Activated CD4-positive, alpha-beta T cell treated with anti-CD3 and anti-CD28 coated beads, Interleukin-2, amount 10 ng/mL, durations not matched to agents 24 days and 14 days (primary cell): ENCODE measurements at regions of chr7 and their contacts with region 1.

Region 1: DNA sequence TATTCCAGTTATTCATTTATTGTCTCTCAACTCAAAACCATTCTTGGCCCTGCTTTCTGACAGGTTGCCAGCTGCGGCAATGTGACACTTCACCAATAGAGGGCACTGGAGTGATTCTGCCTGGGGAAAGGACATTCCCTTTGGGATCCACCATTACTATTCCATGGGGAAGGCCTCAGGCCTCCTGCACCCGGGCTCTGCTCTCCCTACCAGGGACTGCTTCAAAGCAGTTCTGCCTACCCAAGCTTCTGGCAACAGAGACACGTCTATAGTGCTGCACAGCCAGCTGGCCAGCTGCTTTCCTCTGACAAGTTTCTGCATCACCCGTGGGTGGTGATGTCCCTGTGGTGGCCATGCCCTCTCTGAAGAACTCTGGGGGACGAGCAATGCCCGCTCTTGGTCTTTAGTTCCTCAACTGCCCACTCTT is 163.8 kb downstream of the ELMO1 start:
- DNase-seq: peak; percentile 82
- H3K4me3 Mint-ChIP-seq: no peak overlapping the region
- H3K27ac Mint-ChIP-seq: no peak overlapping the region
- H3K4me1 Mint-ChIP-seq: peaks cover 34% of the 10 kb centered on the region
- H3K27me3 Mint-ChIP-seq: no peaks in the 10 kb centered on the region

Region 2: DNA sequence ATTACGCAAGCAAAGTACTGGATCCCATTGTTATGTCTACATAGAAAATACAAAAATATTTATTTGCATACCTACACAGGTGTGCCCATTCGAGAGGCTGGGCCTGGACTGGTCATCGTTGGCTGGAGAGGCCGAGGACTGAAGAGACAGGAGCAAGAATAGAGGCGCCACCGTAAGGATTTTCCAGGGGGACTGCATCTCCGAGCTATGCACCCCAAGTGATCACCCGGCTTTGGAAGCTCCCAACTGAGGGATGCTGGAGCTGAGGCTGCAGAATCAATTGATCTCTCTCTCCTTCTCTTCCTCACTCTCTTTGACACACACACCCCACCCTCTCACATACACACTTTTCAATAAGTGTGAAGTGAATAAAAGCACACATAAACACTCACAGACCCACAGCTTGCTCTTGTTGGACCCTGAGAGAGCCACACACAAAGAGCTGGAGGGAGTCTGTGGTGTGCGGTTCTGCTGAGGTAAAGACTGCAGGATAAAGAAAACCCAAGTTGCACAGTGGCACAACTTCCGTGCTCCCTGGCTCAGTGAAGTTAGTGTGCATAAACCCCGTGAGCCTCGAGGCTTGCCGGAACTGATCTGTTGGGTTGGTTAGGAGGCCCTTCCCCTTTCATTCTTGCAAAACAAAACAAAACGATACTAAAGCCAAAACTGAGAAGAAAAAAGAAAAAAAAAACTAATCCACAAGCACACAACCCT is 560.7 kb before region 1 on chr7 and contains the start of gene AOAH:
- intact Hi-C with region 1: no loop called
- DNase-seq: peak; percentile 95
- H3K4me3 Mint-ChIP-seq: peak within 1 kb of the TSS; percentile 94
- H3K27ac Mint-ChIP-seq: peak within 1 kb of the TSS; percentile 97
- H3K4me1 Mint-ChIP-seq: peaks cover 74% of the 10 kb centered on the region
- H3K27me3 Mint-ChIP-seq: no peaks in the 10 kb centered on the region
- total RNA-seq, gene AOAH: 17.6 and 17.8 TPM in 2 replicates

Region 3: DNA sequence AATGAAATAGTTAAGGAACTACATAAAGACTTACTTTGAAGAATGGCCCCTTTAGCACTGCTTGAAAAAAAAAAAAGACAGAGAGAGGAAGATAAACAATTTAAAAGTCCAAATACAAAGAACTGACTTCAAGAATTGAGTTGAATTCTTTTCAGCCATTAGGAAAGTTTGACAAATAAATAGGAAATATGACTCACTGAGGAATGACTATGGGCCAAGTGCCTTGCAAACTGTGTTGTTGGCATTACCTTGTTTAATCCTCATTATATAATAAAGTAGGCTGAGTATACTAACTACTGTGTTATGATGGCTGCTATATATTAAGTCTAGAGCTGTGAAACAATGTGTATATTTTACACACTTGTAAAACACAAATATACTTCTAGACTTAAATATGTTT is 12.7 kb after region 1 on chr7:
- intact Hi-C with region 1: no loop called
- DNase-seq: no peak
- H3K4me3 Mint-ChIP-seq: no peak overlapping the region
- H3K27ac Mint-ChIP-seq: no peak overlapping the region
- H3K4me1 Mint-ChIP-seq: peaks cover 2% of the 10 kb centered on the region
- H3K27me3 Mint-ChIP-seq: no peaks in the 10 kb centered on the region

Region 4: GRCh38 chr7:37495574-37496184 is 210.9 kb after region 1 on chr7:
- intact Hi-C with region 1: loop called (anchors 5 kb)
- DNase-seq: peak; percentile 62
- H3K4me3 Mint-ChIP-seq: no peak overlapping the region
- H3K27ac Mint-ChIP-seq: no peak overlapping the region
- H3K4me1 Mint-ChIP-seq: peaks cover 5% of the 10 kb centered on the region
- H3K27me3 Mint-ChIP-seq: peaks cover 1% of the 10 kb centered on the region